PC-3 (cell line): ENCODE measurements at regions of chr19 and their contacts with region 1.

Region 1: GRCh38 chr19:53431399-53432087 is at the start of gene ZNF761:
- DNase-seq: peak; percentile 98
- ATAC-seq: peak; percentile 97
- H3K4me3 ChIP-seq: peak within 1 kb of the TSS; percentile 74
- H3K27ac ChIP-seq: peak within 1 kb of the TSS; percentile 57
- H3K4me1 ChIP-seq: peaks cover 8% of the 10 kb centered on the region; the same call in 1 of the 2 replicates
- H3K27me3 ChIP-seq: no peaks in the 10 kb centered on the region
- CTCF ChIP-seq: no peak
- total RNA-seq, gene ZNF761: 15.8 and 16.5 TPM in 2 replicates

Region 2: GRCh38 chr19:53365134-53365898 is 66.2 kb before region 1 on chr19 and contains the start of gene ZNF525:
- CTCF ChIA-PET with region 1: interaction called, 3 read pairs
- POLR2A ChIA-PET with region 1: no interaction called
- intact Hi-C with region 1: loop called (anchors 5 kb)
- DNase-seq: peak; percentile 95
- ATAC-seq: peak; percentile 96
- H3K4me3 ChIP-seq: peak within 1 kb of the TSS; percentile 78
- H3K27ac ChIP-seq: peak within 1 kb of the TSS; percentile 58
- H3K4me1 ChIP-seq: no peaks in the 10 kb centered on the region
- H3K27me3 ChIP-seq: no peaks in the 10 kb centered on the region
- CTCF ChIP-seq: peak; percentile 50; the same call in 1 of the 2 replicates
- total RNA-seq, gene ZNF525: 13.1 and 25.6 TPM in 2 replicates

Region 3: DNA sequence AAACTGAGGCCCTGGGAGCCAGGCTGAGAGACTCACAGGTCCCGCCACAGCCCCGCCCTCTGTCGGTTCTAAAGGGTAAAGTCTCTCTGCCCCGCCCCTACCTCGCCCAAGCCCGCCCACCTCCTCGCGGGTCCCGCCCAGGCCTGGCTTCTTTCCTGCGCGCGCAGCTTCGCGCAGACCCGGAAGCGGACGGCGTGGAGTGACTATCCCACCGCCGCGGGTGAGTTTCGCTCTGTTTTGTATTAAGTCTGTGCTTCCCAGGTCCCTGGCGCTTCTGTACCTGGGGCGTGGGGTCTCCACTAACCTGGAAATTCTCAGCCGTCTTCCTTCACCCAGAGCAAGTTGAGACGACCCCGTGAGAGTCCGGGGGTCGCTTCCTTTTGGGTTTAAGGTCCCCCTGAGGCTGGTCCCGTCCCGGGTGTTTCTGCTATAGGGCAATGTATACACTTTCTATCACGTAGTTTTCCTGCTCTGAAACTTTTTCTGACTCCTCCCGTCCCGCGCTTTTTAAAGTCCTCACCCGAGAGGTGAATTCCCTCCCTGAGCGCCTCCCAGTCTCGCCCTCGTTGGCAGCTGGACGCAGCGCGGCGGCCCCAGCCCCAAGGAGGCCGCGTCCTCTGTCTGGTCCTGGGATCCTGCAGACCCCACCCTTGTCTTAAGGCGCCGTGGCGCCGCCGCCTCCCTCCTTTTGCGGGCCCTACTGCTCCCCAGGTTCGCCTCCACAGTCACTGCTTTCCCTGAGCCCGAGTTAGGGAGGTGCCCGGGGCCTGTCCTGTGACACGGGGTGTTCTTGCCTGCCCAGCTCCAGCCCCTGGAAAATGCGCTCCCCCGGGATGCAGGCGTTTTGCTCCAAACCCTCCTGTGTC is 36.3 kb before region 1 on chr19 and contains the start of gene ZNF765:
- CTCF ChIA-PET with region 1: no interaction called
- POLR2A ChIA-PET with region 1: no interaction called
- intact Hi-C with region 1: loop called (anchors 5 kb)
- DNase-seq: peak; percentile 94
- ATAC-seq: peak; percentile 88
- H3K4me3 ChIP-seq: peak within 1 kb of the TSS; percentile 87
- H3K27ac ChIP-seq: peak within 1 kb of the TSS; percentile 51
- H3K4me1 ChIP-seq: peaks cover 7% of the 10 kb centered on the region; the same call in 1 of the 2 replicates
- H3K27me3 ChIP-seq: no peaks in the 10 kb centered on the region
- CTCF ChIP-seq: peak; percentile 41
- total RNA-seq, gene ZNF765: 9.6 and 11.4 TPM in 2 replicates

Region 4: GRCh38 chr19:53467485-53468262 is 36.1 kb after region 1 on chr19 and contains the start of gene ZNF813:
- CTCF ChIA-PET with region 1: no interaction called
- POLR2A ChIA-PET with region 1: no interaction called
- intact Hi-C with region 1: loop called (anchors 5 kb)
- DNase-seq: peak; percentile 88
- ATAC-seq: peak; percentile 93
- H3K4me3 ChIP-seq: peak within 1 kb of the TSS; percentile 88
- H3K27ac ChIP-seq: peak within 1 kb of the TSS; percentile 28; the same call in 1 of the 2 replicates
- H3K4me1 ChIP-seq: no peaks in the 10 kb centered on the region
- H3K27me3 ChIP-seq: no peaks in the 10 kb centered on the region
- CTCF ChIP-seq: no peak
- total RNA-seq, gene ZNF813: 3.5 and 4.4 TPM in 2 replicates

Region 5: GRCh38 chr19:53511933-53512374 is 80.4 kb after region 1 on chr19:
- CTCF ChIA-PET with region 1: no interaction called
- POLR2A ChIA-PET with region 1: no interaction called
- intact Hi-C with region 1: loop called (anchors 2 kb)
- DNase-seq: peak; percentile 63
- ATAC-seq: peak; percentile 92
- H3K4me3 ChIP-seq: no peak overlapping the region
- H3K27ac ChIP-seq: no peak overlapping the region
- H3K4me1 ChIP-seq: no peaks in the 10 kb centered on the region
- H3K27me3 ChIP-seq: no peaks in the 10 kb centered on the region
- CTCF ChIP-seq: peak; percentile 78